Mammary epithelial cell (primary cell): ENCODE measurements at regions of chr2 and their contacts with region 1.

Region 1: DNA sequence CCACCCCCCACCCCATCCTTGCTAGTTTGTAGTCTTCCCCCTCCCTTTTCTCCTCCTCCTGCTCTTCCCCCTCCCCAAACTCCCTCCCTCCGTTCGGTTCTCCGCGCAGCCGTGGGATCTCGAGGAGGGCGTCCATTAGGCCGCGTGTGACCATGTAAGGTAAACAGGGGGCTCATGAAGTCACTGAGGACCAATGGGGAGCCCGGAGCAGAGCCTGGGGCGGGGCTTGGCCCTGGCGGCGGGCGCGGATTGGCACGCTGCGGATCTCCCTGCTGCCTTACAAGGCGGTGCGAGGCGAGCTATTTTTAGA is 246 bp upstream of the KLF7 start:
- DNase-seq: peak; percentile 100
- H3K4me3 ChIP-seq: peak overlapping the region; percentile 55 to 71 (median 62)
- H3K27ac ChIP-seq: peak overlapping the region; percentile 93
- H3K4me1 ChIP-seq: peaks cover 24% of the 10 kb centered on the region
- H3K27me3 ChIP-seq: no peaks in the 10 kb centered on the region
- CTCF ChIP-seq: no peak

Region 2: DNA sequence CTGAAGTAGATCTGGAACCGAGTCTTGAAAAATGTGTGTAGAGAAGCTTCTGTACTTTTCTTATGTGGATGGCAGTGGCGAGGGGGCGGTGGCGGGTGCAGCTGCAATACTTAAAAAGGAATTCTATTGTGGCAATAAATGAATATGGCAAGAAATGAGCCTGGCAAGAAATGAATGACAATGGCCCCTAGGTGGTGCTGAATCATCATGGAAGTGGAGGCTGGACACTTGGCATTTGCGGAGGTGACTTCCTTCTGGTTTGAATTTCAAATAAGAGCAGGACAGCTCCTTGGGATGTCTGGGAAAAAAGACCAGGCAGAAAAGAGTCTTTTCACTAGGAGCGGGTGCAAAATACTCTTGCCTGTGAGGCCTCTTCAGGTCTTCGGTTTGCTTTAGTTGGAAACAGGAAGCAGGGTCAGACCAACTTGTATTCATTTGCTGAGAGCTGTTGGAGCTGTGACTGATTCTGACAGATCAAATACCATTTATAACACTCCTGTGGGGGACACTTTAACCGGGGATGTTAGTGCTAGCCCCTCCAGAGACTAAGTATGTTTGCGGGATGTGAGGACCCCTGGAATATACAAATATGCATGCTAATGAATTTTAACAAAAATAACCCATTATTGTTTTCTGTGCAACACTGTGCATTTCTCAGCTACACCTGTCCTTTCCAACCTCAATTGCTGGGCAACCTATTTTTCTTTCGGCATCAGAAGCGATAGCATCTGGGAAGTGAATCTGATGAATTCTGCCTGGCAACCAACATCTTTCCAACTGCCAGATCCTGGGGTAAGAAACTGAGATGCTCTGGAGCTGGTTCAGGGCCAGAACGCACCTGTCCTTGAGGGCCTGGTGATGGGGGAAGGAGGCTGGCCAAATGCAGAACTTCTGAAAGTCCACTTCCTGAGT is 365.2 kb before region 1 on chr2:
- CTCF ChIA-PET with region 1: no interaction called
- dilution Hi-C with region 1: no loop called
- in situ Hi-C with region 1: no loop called
- intact Hi-C with region 1: loop called (anchors 2 kb)
- DNase-seq: peak; percentile 69
- H3K4me3 ChIP-seq: no peak overlapping the region
- H3K27ac ChIP-seq: no peak overlapping the region
- H3K4me1 ChIP-seq: no peaks in the 10 kb centered on the region
- H3K27me3 ChIP-seq: no peaks in the 10 kb centered on the region
- CTCF ChIP-seq: peak; percentile 66 to 75

Region 3: GRCh38 chr2:207054521-207054920 is 111.5 kb before region 1 on chr2:
- CTCF ChIA-PET with region 1: no interaction called
- dilution Hi-C with region 1: no loop called
- in situ Hi-C with region 1: no loop called
- intact Hi-C with region 1: no loop called
- DNase-seq: peak; percentile 61
- H3K4me3 ChIP-seq: no peak overlapping the region
- H3K27ac ChIP-seq: no peak overlapping the region
- H3K4me1 ChIP-seq: peaks cover 5% of the 10 kb centered on the region
- H3K27me3 ChIP-seq: no peaks in the 10 kb centered on the region
- CTCF ChIP-seq: peak in 1 of 2 donors; percentile 7

Region 4: GRCh38 chr2:207121784-207122183 is 44.2 kb before region 1 on chr2:
- CTCF ChIA-PET with region 1: no interaction called
- dilution Hi-C with region 1: no loop called
- in situ Hi-C with region 1: no loop called
- intact Hi-C with region 1: loop called (anchors 5 kb)
- DNase-seq: peak; percentile 55
- H3K4me3 ChIP-seq: no peak overlapping the region
- H3K27ac ChIP-seq: no peak overlapping the region
- H3K4me1 ChIP-seq: peaks cover 33% of the 10 kb centered on the region
- H3K27me3 ChIP-seq: no peaks in the 10 kb centered on the region
- CTCF ChIP-seq: no peak

Region 5: DNA sequence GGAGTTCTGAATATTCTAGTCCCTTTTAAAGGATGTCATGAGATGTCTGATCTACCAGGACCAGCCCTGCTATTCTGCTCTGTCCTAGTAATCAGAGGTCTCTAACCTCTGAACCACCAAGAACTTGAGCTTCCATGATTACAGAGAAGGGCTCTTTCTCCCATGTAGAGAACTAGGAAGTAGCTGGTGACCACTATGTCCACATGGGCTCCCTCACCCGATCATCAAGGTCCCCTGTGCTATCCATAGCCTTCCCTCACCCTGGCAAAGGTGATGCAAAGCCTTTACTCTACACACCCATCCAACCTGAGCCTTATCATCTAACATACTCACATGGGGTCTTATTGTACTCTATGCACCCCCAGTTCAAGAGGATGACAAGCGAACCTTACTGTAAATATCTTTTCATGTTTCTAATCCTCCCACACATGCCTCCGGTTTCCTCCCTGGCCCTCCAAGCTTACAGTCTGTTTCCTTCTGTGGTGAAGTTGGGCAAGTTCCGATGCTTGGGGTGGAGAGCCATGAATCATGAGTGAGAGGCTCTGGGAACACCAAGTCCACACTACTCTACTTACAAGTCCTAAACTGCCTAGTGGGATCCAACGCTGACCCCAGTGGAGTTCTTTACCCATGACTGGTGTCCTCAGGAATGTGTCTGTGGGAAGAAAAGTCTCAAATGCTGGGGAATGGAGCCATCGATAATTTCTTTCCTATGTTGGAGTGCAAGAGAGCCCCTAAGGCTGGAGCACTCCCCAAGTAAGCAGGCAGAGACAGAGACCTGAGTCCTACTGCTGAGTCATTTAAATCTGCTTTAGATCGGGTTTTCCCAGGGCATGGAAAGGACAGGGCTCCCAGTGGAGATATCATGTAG is 73.1 kb after region 1 on chr2:
- CTCF ChIA-PET with region 1: interaction called, 3 read pairs
- dilution Hi-C with region 1: no loop called
- in situ Hi-C with region 1: loop called in 1 of 2 experiments (anchors 10 kb)
- intact Hi-C with region 1: loop called (anchors 1 kb)
- DNase-seq: peak; percentile 100
- H3K4me3 ChIP-seq: peak overlapping the region; percentile 31 to 84 (median 78)
- H3K27ac ChIP-seq: peak overlapping the region; percentile 100
- H3K4me1 ChIP-seq: peaks cover 51% of the 10 kb centered on the region
- H3K27me3 ChIP-seq: no peaks in the 10 kb centered on the region
- CTCF ChIP-seq: no peak

Region 6: GRCh38 chr2:207311316-207312005 is 145.5 kb after region 1 on chr2:
- CTCF ChIA-PET with region 1: no interaction called
- dilution Hi-C with region 1: no loop called
- in situ Hi-C with region 1: no loop called
- intact Hi-C with region 1: loop called (anchors 1 kb)
- DNase-seq: peak; percentile 90
- H3K4me3 ChIP-seq: no peak overlapping the region
- H3K27ac ChIP-seq: peak overlapping the region; percentile 46
- H3K4me1 ChIP-seq: peaks cover 19% of the 10 kb centered on the region
- H3K27me3 ChIP-seq: no peaks in the 10 kb centered on the region
- CTCF ChIP-seq: peak in 1 of 2 donors; percentile 37

Region 7: GRCh38 chr2:207394812-207395534 is 229.0 kb after region 1 on chr2:
- CTCF ChIA-PET with region 1: no interaction called
- dilution Hi-C with region 1: no loop called
- in situ Hi-C with region 1: no loop called
- intact Hi-C with region 1: loop called (anchors 1 kb)
- DNase-seq: peak; percentile 100
- H3K4me3 ChIP-seq: no peak overlapping the region
- H3K27ac ChIP-seq: peak overlapping the region; percentile 98
- H3K4me1 ChIP-seq: peaks cover 36% of the 10 kb centered on the region
- H3K27me3 ChIP-seq: no peaks in the 10 kb centered on the region
- CTCF ChIP-seq: no peak